GM18951 (cell line): ENCODE measurements at regions of chr18 and their contacts with region 1.

Region 1: DNA sequence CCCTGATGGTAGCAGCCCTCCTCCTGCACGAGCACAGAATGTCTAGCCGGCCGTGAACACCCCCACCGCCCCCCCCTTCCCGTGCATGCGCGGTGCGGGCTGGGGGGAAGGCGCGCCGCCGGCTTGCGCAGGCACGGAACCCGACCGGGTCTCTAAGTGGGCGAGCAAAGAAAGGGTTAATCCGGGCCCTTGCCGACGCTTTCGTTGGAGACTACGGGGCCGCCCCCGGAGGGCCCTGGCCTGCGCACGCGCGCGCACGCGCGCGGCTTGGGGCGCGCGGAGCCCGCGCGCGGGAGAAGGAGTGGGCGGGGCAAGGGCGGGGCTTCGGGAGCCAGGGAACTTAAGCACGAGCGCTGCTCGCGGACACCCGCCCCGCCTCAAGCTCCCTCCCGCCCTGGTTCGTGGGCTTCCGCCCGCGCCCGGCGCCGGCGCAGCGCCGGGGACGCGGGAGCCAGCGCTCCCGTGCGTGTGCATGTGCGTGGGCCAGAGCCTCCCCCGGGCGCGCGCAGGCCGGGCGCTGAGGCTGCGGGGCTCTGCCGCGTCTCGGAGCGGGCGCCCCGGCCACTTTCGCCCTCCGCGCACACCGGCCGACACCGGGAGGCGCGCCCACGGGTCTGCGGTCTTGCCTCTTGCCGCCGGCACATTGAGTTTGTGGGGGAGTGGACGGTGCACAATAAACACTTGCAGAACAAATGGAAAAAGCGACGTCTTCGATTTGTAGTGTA is 617 bp upstream of the ZBTB14 start:
- POLR2A ChIP-seq: peak; percentile 80

Region 2: GRCh38 chr18:5237723-5238370 is 58.3 kb before region 1 on chr18:
- in situ Hi-C with region 1: loop called (anchors 10 kb)
- POLR2A ChIP-seq: peak; percentile 90